ENCODE measurements at regions of chr5 and their contacts with region 1.

Region 1: DNA sequence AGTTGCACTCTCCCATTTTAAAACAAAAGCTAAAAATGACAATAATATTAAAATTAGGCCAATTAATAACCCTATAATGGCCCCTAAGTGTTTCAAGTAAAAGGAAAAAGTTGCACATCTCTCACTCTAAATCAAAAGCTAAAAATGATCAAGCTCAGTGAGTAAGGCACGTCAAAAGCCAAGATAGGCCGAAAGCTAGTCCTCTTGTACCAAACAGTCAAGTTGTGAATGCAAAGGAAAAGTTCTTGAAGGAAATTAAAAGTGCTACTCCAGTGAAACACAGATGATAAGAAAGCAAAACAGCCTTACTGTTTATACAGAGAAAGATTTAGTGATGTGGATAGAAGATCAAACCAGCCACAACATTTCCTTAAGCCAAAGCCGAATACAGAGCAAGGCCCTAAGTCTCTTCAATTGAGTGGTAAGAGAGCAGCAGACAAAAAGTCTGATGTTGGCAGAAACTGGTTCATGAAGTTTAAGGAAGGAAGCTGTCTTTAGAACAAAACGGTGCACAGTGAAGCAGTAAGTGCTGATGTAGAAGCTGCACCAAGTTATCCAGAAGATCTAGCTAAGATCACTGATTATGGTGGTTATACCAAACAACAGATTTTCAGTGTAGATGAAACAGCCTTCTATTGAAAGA is 144.1 kb upstream of the ACOT12 start:
- DNase-seq: no peak
- H3K4me3 Mint-ChIP-seq: no peak overlapping the region
- H3K27ac Mint-ChIP-seq: peak overlapping the region; percentile 28
- H3K4me1 Mint-ChIP-seq: peaks cover 31% of the 10 kb centered on the region
- H3K27me3 Mint-ChIP-seq: no peaks in the 10 kb centered on the region

Region 2: GRCh38 chr5:81556809-81557208 is 18.8 kb after region 1 on chr5:
- intact Hi-C with region 1: loop called (anchors 2 kb)
- DNase-seq: no peak
- H3K4me3 Mint-ChIP-seq: no peak overlapping the region
- H3K27ac Mint-ChIP-seq: no peak overlapping the region
- H3K4me1 Mint-ChIP-seq: peaks cover 21% of the 10 kb centered on the region
- H3K27me3 Mint-ChIP-seq: no peaks in the 10 kb centered on the region